Activated CD4-positive, alpha-beta T cell treated with anti-CD3 and anti-CD28 coated beads for 36 hours (primary cell): ENCODE measurements at regions of chr10 and their contacts with region 1.

Region 1: GRCh38 chr10:104353325-104354048 is at the start of gene CFAP58:
- DNase-seq: peak; percentile 94
- ATAC-seq: peak; percentile 77
- H3K4me3 Mint-ChIP-seq: peak within 1 kb of the TSS; percentile 11
- H3K27ac Mint-ChIP-seq: peak within 1 kb of the TSS; percentile 30
- H3K4me1 Mint-ChIP-seq: no peaks in the 10 kb centered on the region
- H3K27me3 Mint-ChIP-seq: no peaks in the 10 kb centered on the region
- total RNA-seq, gene CFAP58: 0.60 to 0.64 TPM

Region 2: DNA sequence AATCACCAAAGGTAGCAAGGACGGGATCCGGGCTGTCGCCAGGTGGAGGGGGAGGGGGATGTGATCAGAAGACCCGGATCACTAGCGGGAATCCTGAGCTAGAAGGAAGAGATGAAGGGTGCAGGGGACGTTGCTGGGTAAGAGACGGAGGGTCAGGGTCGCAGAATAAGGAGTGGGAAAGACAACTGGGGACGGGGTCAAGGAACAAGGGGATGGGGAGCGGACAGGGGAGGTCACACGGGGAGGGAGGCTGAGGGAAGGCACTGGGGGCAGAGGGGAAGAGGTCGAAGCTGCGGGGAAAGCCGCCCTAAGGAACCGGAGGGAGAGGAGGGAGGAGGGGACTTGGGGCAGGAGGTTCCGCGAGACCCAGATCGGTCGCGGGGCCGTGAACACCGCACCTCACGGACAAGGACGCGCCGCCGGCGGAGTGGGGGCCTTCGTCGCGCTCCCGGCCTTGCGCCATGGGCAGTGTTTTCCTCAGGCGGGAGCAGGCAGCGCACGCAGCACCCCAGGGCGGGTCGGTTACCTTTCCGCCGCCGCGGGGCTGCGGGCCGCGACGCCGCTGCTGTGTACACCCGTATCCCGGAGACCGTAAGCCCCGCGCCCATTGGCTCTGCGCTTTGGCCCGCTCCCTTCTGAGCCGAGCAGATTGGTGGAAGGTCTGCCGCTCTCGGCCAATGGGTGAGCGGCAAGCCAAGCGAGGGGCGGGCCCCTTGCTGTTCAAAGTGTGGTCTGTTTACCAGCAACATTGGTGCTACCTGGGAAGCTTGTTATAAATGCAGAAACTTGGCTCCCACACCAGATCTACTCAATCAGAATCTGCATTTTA is 121.5 kb before region 1 on chr10 and contains the start of gene CFAP43:
- CTCF ChIA-PET with region 1: no interaction called
- POLR2A ChIA-PET with region 1: no interaction called
- intact Hi-C with region 1: loop called in 1 of 2 experiments (anchors 1 kb)
- DNase-seq: peak; percentile 100
- ATAC-seq: peak; percentile 100
- H3K4me3 Mint-ChIP-seq: peak within 1 kb of the TSS; percentile 78
- H3K27ac Mint-ChIP-seq: peak within 1 kb of the TSS; percentile 21
- H3K4me1 Mint-ChIP-seq: peaks cover 5% of the 10 kb centered on the region
- H3K27me3 Mint-ChIP-seq: peaks cover 13% of the 10 kb centered on the region
- total RNA-seq, gene CFAP43: 0.09 TPM

Region 3: GRCh38 chr10:104274762-104275721 is 78.4 kb before region 1 on chr10:
- CTCF ChIA-PET with region 1: interaction called, 78 read pairs
- POLR2A ChIA-PET with region 1: no interaction called
- intact Hi-C with region 1: loop called (anchors 1 kb)
- DNase-seq: peak; percentile 75
- ATAC-seq: peak; percentile 93
- H3K4me3 Mint-ChIP-seq: peak overlapping the region; percentile 30
- H3K27ac Mint-ChIP-seq: no peak overlapping the region
- H3K4me1 Mint-ChIP-seq: no peaks in the 10 kb centered on the region
- H3K27me3 Mint-ChIP-seq: peaks cover 8% of the 10 kb centered on the region

Region 4: GRCh38 chr10:104291439-104291951 is 62.0 kb before region 1 on chr10:
- CTCF ChIA-PET with region 1: interaction called, 95 read pairs
- POLR2A ChIA-PET with region 1: interaction called, 4 read pairs
- intact Hi-C with region 1: loop called (anchors 1 kb)
- DNase-seq: peak; percentile 94
- ATAC-seq: peak; percentile 99
- H3K4me3 Mint-ChIP-seq: no peak overlapping the region
- H3K27ac Mint-ChIP-seq: no peak overlapping the region
- H3K4me1 Mint-ChIP-seq: peaks cover 19% of the 10 kb centered on the region
- H3K27me3 Mint-ChIP-seq: peaks cover 15% of the 10 kb centered on the region

Region 5: GRCh38 chr10:104322416-104322782 is 31.1 kb before region 1 on chr10:
- CTCF ChIA-PET with region 1: interaction called, 11 read pairs
- POLR2A ChIA-PET with region 1: interaction called, 5 read pairs
- intact Hi-C with region 1: no loop called
- DNase-seq: peak; percentile 64
- ATAC-seq: peak; percentile 64
- H3K4me3 Mint-ChIP-seq: peak overlapping the region; percentile 51
- H3K27ac Mint-ChIP-seq: peak overlapping the region; percentile 87
- H3K4me1 Mint-ChIP-seq: peaks cover 93% of the 10 kb centered on the region
- H3K27me3 Mint-ChIP-seq: no peaks in the 10 kb centered on the region

Region 6: GRCh38 chr10:104337974-104338735 is 15.3 kb before region 1 on chr10 and contains the start of gene ITPRIP:
- CTCF ChIA-PET with region 1: interaction called, 16 read pairs
- POLR2A ChIA-PET with region 1: interaction called, 9 read pairs
- intact Hi-C with region 1: loop called (anchors 1 kb)
- DNase-seq: peak; percentile 82
- ATAC-seq: peak; percentile 78
- H3K4me3 Mint-ChIP-seq: peak within 1 kb of the TSS; percentile 93
- H3K27ac Mint-ChIP-seq: peak within 1 kb of the TSS; percentile 99
- H3K4me1 Mint-ChIP-seq: peaks cover 45% of the 10 kb centered on the region
- H3K27me3 Mint-ChIP-seq: no peaks in the 10 kb centered on the region
- total RNA-seq, gene ITPRIP: 20.3 to 21.6 TPM